ENCODE measurements at regions of chr22 and their contacts with region 1.

Region 1: DNA sequence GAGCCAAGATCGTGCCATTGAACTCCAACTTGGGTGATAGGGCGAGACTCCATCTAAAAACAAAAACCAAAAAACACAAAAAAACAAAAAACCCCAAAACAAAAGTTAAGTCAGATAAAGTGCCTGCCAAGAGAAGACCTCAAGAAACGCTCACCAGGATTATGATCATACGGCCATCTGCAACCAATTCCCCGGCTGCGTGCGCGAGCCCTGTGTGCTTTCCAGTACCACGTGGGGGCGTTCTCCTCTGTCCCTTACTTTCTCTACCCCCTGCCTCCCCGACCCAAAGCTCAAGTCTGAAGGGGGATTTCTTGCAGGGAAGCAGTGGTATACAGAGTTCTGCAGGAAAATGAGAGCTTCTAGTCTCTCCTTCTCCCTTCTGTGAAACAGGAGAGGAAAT is 10.5 kb upstream of the RPS19BP1 start:
- ATAC-seq: peak; percentile 20 to 77 (median 53)
- H3K4me3 ChIP-seq: no peak overlapping the region
- H3K27ac ChIP-seq: no peak overlapping the region
- H3K4me1 ChIP-seq: peaks cover 0 to 18% of the 10 kb centered on the region in 2 donors

Region 2: DNA sequence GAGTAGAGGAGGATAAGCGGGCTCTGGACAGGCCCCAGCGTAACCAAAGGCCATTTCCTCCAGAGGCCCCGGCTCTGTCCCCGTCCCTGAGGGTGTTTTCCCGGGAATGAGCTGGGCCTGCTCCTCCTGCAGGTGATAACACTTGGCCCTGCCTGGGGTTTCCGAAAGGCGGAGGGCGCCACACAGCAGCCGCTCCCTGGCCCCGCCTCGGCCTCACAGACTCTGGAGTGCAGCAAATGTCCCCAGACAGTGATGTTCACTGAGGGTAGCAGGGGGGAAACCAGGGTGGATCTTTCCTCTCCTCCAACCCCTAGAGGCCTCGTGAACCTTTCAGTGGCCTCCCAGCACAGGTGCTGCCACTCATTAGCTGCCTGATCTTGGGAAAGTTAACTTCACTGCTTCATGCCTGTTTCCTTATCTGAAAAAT is 96.8 kb before region 1 on chr22:
- in situ Hi-C with region 1: no loop called
- ATAC-seq: peak in 6 of 8 experiments; percentile 11 to 50 (median 24)
- H3K4me3 ChIP-seq: no peak overlapping the region
- H3K27ac ChIP-seq: no peak overlapping the region
- H3K4me1 ChIP-seq: peaks cover 8 to 10% of the 10 kb centered on the region in 2 donors

Region 3: GRCh38 chr22:40024201-40025061 is 481.3 kb after region 1 on chr22:
- in situ Hi-C with region 1: loop called in 3 of 9 experiments (anchors 5 to 25 kb)
- ATAC-seq: peak; percentile 68 to 96 (median 71)
- H3K4me3 ChIP-seq: no peak overlapping the region
- H3K27ac ChIP-seq: no peak overlapping the region
- H3K4me1 ChIP-seq: peaks cover 17 to 22% of the 10 kb centered on the region in 2 donors

Region 4: GRCh38 chr22:40036591-40037225 is 493.6 kb after region 1 on chr22:
- in situ Hi-C with region 1: loop called in 8 of 9 experiments (anchors 10 to 25 kb)
- ATAC-seq: peak; percentile 72 to 90 (median 80)
- H3K4me3 ChIP-seq: no peak overlapping the region
- H3K27ac ChIP-seq: no peak overlapping the region
- H3K4me1 ChIP-seq: peaks cover 0 to 7% of the 10 kb centered on the region in 2 donors